ENCODE measurements at regions of chr19 and their contacts with region 1.

Region 1: GRCh38 chr19:48795055-48795684 is 15.7 kb downstream of the BCAT2 start:
- DNase-seq: peak; percentile 88 to 93
- H3K4me3 ChIP-seq: peak overlapping the region; percentile 39 to 61 (median 49)
- H3K27ac ChIP-seq: peak overlapping the region; percentile 86 to 91
- H3K4me1 ChIP-seq: no peaks in the 10 kb centered on the region
- H3K27me3 ChIP-seq: no peaks in the 10 kb centered on the region
- CTCF ChIP-seq: peak; percentile 93 to 99 (median 98)
- POLR2A ChIP-seq: no peak

Region 2: DNA sequence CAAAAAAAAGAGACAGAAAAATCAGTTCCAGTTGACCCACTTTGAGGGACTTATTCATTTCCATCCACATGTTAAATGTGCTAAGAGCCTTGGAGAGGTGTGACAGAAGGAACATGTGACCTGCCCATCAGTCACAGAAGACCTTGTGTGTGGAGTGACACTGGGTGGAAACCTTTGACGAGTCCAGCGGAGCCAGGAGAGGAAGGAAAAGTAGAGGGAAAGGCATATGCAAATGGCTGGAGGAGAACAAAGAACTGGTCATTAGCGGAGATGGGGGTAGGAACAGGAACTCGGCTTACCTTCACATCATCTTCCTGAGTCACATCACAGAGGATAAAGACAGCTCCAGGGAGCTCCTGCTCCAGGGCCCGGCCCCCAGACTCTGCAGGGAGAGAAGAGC is 38.8 kb after region 1 on chr19:
- intact Hi-C with region 1: loop called (anchors 5 kb)
- DNase-seq: no peak
- H3K4me3 ChIP-seq: no peak overlapping the region
- H3K27ac ChIP-seq: no peak overlapping the region
- H3K4me1 ChIP-seq: no peaks in the 10 kb centered on the region
- H3K27me3 ChIP-seq: no peaks in the 10 kb centered on the region
- CTCF ChIP-seq: no peak
- POLR2A ChIP-seq: no peak